ENCODE measurements at regions of chr11 and their contacts with region 1.

Region 1: GRCh38 chr11:64204464-64204989 is 2.0 kb upstream of the FERMT3 start:
- DNase-seq: peak; percentile 78
- H3K4me3 Mint-ChIP-seq: no peak overlapping the region
- H3K27ac Mint-ChIP-seq: peak overlapping the region; percentile 31
- H3K4me1 Mint-ChIP-seq: peaks cover 9% of the 10 kb centered on the region
- H3K27me3 Mint-ChIP-seq: no peaks in the 10 kb centered on the region
- CTCF ChIP-seq: peak; percentile 12

Region 2: GRCh38 chr11:64245797-64246620 is 41.5 kb after region 1 on chr11:
- CTCF ChIA-PET with region 1: interaction called, 11 read pairs
- intact Hi-C with region 1: no loop called
- DNase-seq: peak; percentile 95
- H3K4me3 Mint-ChIP-seq: peak overlapping the region; percentile 96
- H3K27ac Mint-ChIP-seq: peak overlapping the region; percentile 82
- H3K4me1 Mint-ChIP-seq: peaks cover 28% of the 10 kb centered on the region
- H3K27me3 Mint-ChIP-seq: no peaks in the 10 kb centered on the region
- CTCF ChIP-seq: no peak